ENCODE measurements at regions of chr12 and their contacts with region 1.

Region 1: GRCh38 chr12:26126340-26127284 is 1.8 kb upstream of the BHLHE41 start:
- DNase-seq: peak; percentile 86 to 89
- H3K4me3 ChIP-seq: peak overlapping the region; percentile 59
- H3K4me3 Mint-ChIP-seq: peak overlapping the region; percentile 88
- H3K27ac Mint-ChIP-seq: peak overlapping the region; percentile 71
- H3K4me1 ChIP-seq: peaks cover 20% of the 10 kb centered on the region
- H3K4me1 Mint-ChIP-seq: peaks cover 21% of the 10 kb centered on the region
- H3K27me3 ChIP-seq: peaks cover 11% of the 10 kb centered on the region
- H3K27me3 Mint-ChIP-seq: peaks cover 34% of the 10 kb centered on the region
- CTCF ChIP-seq: no peak

Region 2: DNA sequence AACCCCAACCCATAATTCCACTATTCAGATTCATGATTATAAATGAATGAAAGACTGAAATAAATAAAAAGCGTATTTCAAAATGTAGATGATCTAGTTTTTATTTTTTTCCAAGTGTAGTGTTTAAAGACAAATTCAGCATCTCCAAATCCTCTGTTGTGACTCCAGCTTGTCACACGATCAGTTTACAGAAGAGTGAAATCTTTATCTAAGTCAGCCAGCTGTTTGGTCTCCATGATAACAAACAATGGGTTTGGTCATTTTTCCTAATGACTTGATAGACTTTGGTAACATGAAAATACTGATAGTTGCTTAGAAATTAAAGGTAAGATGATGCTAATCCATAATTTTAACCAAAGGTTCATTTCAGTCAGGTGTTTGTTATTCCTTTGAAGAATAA is 282.6 kb before region 1 on chr12:
- CTCF ChIA-PET with region 1: no interaction called
- POLR2A ChIA-PET with region 1: no interaction called
- intact Hi-C with region 1: no loop called
- DNase-seq: no peak
- H3K4me3 ChIP-seq: no peak overlapping the region
- H3K4me3 Mint-ChIP-seq: no peak overlapping the region
- H3K27ac Mint-ChIP-seq: peak overlapping the region; percentile 14
- H3K4me1 ChIP-seq: no peaks in the 10 kb centered on the region
- H3K4me1 Mint-ChIP-seq: peaks cover 13% of the 10 kb centered on the region
- H3K27me3 ChIP-seq: no peaks in the 10 kb centered on the region
- H3K27me3 Mint-ChIP-seq: no peaks in the 10 kb centered on the region
- CTCF ChIP-seq: no peak

Region 3: GRCh38 chr12:26156201-26156871 is 29.7 kb after region 1 on chr12:
- CTCF ChIA-PET with region 1: no interaction called
- POLR2A ChIA-PET with region 1: no interaction called
- intact Hi-C with region 1: loop called (anchors 1 kb)
- DNase-seq: no peak
- H3K4me3 ChIP-seq: no peak overlapping the region
- H3K4me3 Mint-ChIP-seq: no peak overlapping the region
- H3K27ac Mint-ChIP-seq: no peak overlapping the region
- H3K4me1 ChIP-seq: peaks cover 22% of the 10 kb centered on the region
- H3K4me1 Mint-ChIP-seq: peaks cover 12% of the 10 kb centered on the region
- H3K27me3 ChIP-seq: no peaks in the 10 kb centered on the region
- H3K27me3 Mint-ChIP-seq: no peaks in the 10 kb centered on the region
- CTCF ChIP-seq: no peak

Region 4: DNA sequence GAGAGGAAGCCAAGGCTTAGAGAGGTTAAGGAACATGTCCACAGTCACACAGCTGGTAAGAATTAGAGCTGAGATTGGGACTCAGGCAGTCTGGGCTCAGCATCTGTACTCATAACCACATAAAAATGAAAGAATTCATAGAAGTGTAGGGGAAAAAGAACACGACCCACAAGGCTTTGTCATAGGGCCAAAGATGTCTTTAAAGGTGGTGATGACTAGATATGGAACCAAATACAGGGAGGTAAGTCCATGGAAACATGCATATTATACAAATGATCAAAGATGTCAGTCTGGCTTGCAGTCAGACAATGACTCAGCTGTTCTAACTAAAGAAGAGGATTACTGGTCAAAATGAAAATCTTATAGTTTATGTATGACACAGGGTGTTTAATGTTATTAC is 61.5 kb after region 1 on chr12:
- CTCF ChIA-PET with region 1: no interaction called
- POLR2A ChIA-PET with region 1: no interaction called
- intact Hi-C with region 1: loop called (anchors 5 kb)
- DNase-seq: no peak
- H3K4me3 ChIP-seq: no peak overlapping the region
- H3K4me3 Mint-ChIP-seq: no peak overlapping the region
- H3K27ac Mint-ChIP-seq: no peak overlapping the region
- H3K4me1 ChIP-seq: no peaks in the 10 kb centered on the region
- H3K4me1 Mint-ChIP-seq: peaks cover 6% of the 10 kb centered on the region
- H3K27me3 ChIP-seq: no peaks in the 10 kb centered on the region
- H3K27me3 Mint-ChIP-seq: no peaks in the 10 kb centered on the region
- CTCF ChIP-seq: no peak

Region 5: GRCh38 chr12:26389348-26389747 is 262.7 kb after region 1 on chr12:
- CTCF ChIA-PET with region 1: no interaction called
- POLR2A ChIA-PET with region 1: no interaction called
- intact Hi-C with region 1: loop called (anchors 5 kb)
- DNase-seq: peak in 1 of 2 experiments; percentile 69
- H3K4me3 ChIP-seq: no peak overlapping the region
- H3K4me3 Mint-ChIP-seq: peak overlapping the region; percentile 15
- H3K27ac Mint-ChIP-seq: peak overlapping the region; percentile 5
- H3K4me1 ChIP-seq: peaks cover 15% of the 10 kb centered on the region
- H3K4me1 Mint-ChIP-seq: peaks cover 12% of the 10 kb centered on the region
- H3K27me3 ChIP-seq: no peaks in the 10 kb centered on the region
- H3K27me3 Mint-ChIP-seq: no peaks in the 10 kb centered on the region
- CTCF ChIP-seq: no peak

Measured in Caco-2 (cell line).